Activated CD4-positive, alpha-beta T cell treated with anti-CD3 and anti-CD28 coated beads, Interleukin-2, amount 10 ng/mL, durations not matched to agents 24 days and 14 days (primary cell): ENCODE measurements at regions of chrX and their contacts with region 1.

Region 1: GRCh38 chrX:1462596-1463251 is 10.0 kb upstream of the ASMTL start:
- DNase-seq: peak; percentile 93
- H3K4me3 Mint-ChIP-seq: peak overlapping the region; percentile 83
- H3K27ac Mint-ChIP-seq: peak overlapping the region; percentile 87
- H3K4me1 Mint-ChIP-seq: peaks cover 47% of the 10 kb centered on the region
- H3K27me3 Mint-ChIP-seq: no peaks in the 10 kb centered on the region

Region 2: DNA sequence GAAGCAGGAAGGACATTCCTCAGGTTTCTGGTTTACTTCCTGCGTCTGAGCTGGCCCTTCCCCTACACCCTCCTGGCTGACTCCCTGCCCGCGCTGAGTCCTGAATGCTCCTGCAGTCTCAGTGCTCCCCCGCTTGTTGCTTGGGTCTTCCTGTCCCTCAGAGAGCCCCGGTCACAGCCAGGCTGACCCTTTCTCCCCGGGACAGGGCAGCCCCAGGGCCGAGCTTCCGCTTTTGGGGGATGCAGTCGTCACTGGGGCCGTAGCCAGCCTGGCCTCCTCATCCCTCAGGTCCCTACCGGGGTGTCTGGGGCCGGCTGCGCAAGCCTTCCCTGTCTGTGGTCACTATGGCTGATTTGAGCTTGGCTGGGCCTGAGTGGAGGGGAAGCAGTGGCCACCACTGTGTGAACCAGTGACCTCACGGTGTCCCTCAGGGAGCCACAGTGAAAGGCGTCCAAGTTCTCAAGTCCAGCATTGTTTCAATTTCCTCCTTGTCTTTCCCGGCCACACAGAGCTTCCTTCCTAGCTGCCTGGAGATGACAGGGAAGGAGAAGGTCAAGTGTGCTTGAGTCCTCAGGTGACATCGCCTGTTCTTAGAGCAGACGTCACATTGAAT is 24.1 kb after region 1 on chrX:
- intact Hi-C with region 1: no loop called
- DNase-seq: no peak
- H3K4me3 Mint-ChIP-seq: no peak overlapping the region
- H3K27ac Mint-ChIP-seq: no peak overlapping the region
- H3K4me1 Mint-ChIP-seq: peaks cover 34% of the 10 kb centered on the region
- H3K27me3 Mint-ChIP-seq: no peaks in the 10 kb centered on the region

Region 3: DNA sequence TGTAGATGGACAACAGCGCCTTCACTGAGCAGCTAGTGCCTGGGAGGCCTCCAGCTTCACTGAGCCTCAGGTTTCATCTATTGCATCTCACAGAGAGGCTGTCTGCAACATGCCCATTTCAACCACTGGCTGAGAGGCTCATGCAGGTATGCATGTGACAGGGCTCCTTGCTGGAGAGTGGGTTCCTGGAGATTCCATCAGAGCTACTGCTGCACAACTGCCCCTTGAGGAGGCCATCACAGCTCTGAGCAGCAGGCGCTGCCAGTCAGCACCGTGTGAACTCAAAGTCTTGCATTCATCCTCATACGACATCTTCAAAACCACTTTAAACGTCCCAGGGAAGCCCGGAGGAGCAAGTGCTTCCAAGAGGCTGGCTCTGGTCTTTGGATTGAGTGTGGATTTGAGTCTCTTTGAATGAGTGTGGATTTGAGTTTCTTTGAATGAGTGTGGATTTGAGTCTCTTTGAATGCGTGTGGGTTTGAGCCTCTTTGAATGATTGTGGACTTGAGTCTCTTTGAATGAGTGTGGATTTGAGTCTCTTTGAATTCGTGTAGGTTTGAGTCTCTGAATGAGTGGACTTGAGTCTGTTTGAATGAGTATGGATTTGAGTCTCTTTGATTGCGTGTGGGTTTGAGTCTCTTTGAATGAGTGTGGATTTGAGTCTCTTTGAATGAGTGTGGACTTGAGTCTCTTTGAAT is 65.6 kb after region 1 on chrX:
- intact Hi-C with region 1: loop called (anchors 2 kb)
- DNase-seq: peak; percentile 55
- H3K4me3 Mint-ChIP-seq: no peak overlapping the region
- H3K27ac Mint-ChIP-seq: no peak overlapping the region
- H3K4me1 Mint-ChIP-seq: peaks cover under 1% of the 10 kb centered on the region
- H3K27me3 Mint-ChIP-seq: no peaks in the 10 kb centered on the region

Region 4: DNA sequence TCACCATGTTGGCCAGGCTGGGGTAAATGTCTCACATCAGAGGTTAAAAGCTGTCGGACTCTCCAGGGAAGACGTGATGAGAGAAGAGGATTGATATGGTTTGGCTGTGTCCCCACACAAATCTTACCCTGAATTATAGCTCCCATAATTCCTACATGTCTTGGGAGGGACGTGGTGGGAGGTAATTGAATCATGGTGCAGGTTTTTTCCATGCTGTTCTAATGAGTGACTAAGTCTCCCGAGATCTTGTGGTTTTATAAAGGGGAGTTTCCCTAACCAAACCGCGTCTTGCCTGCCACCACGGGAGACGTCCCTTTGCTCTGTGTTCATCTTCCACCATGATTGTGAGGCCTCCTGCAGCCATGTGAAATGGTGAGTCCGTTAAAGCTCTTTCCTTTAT is 216.5 kb after region 1 on chrX:
- intact Hi-C with region 1: no loop called
- DNase-seq: peak; percentile 65
- H3K4me3 Mint-ChIP-seq: no peak overlapping the region
- H3K27ac Mint-ChIP-seq: peak overlapping the region; percentile 10
- H3K4me1 Mint-ChIP-seq: peaks cover 19% of the 10 kb centered on the region
- H3K27me3 Mint-ChIP-seq: no peaks in the 10 kb centered on the region